ENCODE measurements at regions of chr12 and their contacts with region 1.

Region 1: DNA sequence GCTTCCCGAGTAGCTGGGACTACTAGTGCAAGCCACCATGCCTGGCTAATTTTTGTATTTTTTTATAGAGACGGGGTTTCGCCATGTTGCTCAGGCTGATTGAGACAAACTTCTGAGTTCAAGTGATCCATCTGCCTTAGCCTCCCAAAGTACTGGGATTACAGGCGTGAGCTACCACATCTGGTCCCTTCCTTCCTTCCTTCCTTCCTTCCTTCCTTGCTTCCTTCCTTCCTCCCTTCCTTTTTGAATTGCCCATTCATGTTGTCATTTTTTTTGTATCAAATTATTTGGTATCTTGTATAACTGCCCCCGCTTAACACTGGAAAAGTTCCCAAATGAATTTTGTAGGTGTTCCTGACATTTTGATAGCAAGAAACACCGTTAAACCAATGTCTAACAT is 11.7 kb downstream of the RAD9B start:
- DNase-seq: no peak

Region 2: DNA sequence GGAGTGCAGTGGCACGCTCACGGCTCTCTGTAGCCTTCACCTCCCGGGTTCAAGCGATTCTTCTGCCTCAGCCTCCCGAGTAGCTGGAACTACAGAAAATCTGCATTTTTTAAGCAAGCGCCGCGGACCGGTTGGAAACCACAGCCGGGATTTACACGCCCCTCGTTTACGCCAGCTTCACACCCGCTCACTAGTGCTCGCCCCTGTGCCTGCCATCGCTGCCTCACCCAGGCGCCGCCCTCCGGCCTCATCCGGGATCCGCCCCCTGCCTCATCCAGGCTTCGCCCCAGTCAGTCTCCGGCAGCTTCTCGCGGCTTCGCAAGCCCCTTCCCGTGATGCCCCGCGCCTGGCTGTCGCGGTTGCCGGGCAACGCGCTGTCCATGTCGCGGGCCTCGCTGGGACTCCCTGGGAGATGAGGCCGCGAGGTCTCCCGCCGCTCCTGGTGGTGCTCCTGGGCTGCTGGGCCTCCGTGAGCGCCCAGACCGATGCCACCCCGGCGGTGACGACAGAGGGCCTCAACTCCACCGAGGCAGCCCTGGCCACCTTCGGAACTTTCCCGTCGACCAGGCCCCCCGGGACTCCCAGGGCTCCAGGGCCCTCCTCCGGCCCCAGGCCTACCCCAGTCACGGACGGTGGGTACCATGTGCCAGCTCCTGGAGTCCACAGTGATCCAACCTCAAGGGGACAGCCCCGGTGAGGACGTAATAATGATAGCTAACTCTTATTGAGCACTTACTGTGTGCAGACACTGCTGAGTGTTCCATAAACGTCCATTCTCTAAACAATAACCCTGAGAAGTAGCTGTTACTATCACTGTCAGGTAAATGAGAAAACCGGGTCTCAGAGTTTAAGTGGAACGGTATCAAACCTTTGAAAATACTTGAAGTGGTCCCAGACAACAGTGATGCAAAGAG is 100.2 kb after region 1 on chr12 and contains the start of gene TCTN1:
- intact Hi-C with region 1: loop called in 1 of 2 experiments (anchors 5 kb)
- DNase-seq: peak; percentile 99
- total RNA-seq, gene TCTN1: 24.0 to 35.8 TPM